ENCODE measurements at regions of chr18 and their contacts with region 1.

Region 1: DNA sequence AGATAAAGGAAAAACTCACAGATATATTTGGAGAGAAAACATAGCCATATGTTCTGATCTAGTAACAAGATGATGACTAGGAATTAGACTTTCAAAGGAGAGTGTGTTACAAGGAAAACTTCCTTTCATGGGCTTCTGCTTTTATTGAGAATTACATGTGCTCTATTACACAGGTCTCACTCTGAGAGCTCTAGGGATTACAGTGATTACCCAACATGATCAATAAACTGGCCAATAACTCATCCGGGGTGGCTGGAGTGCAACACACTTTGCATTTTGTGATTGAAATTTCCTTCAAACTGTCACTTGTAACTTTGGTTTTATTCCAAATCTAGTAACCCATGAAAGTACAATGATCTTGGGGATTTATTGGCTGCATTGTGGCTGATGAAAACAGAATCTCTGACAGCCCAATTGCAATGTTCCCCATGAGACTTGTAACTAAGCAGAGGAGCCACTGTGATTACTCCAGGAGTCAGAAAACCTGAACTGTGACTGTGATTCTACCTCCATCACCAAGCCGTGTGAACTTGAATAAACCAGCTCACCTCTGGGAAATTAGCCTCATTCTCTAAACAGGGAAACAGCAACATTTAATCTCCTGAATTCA is 40.2 kb upstream of the LRRC30 start:
- DNase-seq: no peak
- ATAC-seq: no peak

Region 2: GRCh38 chr18:6781786-6782185 is 408.9 kb before region 1 on chr18:
- intact Hi-C with region 1: no loop called
- DNase-seq: no peak
- ATAC-seq: peak; percentile 79

Region 3: DNA sequence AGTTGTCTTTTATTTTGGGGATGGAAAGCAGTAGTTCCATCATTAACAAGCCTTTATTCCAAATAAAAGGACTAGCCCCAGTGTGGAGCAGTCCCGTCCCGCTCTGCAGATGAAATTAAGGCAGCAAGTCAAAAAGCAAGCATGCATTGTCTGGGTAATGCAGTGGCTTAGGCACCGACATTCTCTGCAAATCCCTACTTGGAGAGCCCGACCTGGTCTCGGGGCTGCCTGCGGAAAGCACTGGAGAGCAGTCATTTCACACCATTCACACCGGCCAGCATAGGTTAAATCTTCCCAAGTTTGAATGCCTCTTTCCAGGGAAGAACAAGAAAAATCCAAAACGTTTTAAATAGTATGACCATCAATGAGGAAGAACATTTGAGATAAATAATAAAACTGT is 1394.1 kb after region 1 on chr18:
- intact Hi-C with region 1: loop called (anchors 5 kb)
- DNase-seq: no peak
- ATAC-seq: no peak

Measured in left ventricle myocardium superior (tissue), 1 donor.